Activated B cell treated with CpG ODN at 0.5 μM for 24 hours (primary cell): ENCODE measurements at regions of chr20 and their contacts with region 1.

Region 1: DNA sequence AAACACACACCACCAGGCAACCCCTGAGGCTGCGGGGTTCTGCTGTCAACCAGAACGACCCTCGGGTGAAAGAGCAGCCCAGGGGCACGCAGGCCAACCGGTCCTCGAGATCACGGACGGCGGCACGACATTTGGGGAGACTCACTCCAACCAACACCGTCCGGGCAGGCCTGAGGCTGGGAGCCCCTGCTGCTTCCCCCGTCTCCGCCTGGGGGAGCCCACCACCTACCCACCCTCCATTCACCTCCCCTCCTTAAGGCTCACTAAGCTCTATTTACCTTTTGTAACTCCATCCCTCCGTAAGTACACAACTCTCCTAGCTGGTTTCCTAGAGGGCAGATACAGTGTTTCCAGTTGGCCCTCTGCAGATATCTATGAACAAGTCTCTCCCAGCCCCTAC is 971.3 kb upstream of the DEFB115 start:
- DNase-seq: no peak
- ATAC-seq: no peak
- H3K4me3 Mint-ChIP-seq: no peak overlapping the region
- H3K27ac Mint-ChIP-seq: no peak overlapping the region
- H3K4me1 Mint-ChIP-seq: peaks cover 38% of the 10 kb centered on the region
- H3K27me3 Mint-ChIP-seq: no peaks in the 10 kb centered on the region
- CTCF ChIP-seq: no peak

Region 2: DNA sequence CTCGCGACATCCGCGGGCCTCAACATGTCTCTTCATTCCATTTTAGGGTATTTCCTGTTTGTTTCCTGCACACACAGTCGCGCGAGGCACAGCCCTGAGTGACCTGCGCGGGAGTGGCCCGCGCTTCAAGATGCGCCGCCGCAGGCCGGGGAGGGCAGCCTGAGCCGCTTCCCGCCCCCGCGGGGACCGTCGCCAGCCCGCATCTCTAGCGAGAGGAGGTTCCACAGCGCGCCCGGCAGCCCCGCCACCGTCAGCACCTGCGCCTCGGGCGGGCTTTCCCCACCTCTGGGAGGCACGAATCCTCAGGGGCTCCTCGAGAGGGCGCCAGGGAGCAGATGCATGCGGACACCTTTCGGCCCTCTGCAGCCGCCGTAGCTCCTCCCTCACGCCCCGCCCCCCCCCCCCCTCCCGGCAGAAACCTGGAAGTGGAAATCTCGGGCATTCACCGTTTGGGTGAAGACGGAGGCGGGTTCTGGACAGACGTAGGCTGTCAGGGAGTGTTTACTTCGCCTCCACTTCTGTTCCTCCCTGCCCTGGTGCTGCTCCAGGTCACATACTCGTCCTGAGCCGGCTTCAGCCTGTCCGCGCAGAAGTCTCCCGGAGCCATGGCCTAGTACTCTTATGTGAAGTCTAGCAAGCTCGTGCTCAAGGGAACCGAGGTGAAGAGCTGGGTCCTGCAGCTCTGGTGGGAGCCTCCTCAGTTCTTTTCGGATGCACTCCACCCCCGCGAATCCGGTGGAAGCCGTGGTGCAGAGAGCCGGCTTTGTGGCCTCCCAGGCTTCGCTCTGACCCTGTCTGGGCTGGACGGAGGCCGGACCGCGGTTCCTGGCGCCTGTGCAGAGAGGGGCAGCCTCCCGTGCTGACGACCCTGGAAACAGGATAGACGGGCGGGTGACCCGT is 90.9 kb after region 1 on chr20:
- CTCF ChIA-PET with region 1: no interaction called
- POLR2A ChIA-PET with region 1: interaction called, 7 read pairs
- intact Hi-C with region 1: loop called (anchors 1 kb)
- DNase-seq: peak; percentile 85
- ATAC-seq: peak; percentile 96
- H3K4me3 Mint-ChIP-seq: peak overlapping the region; percentile 96
- H3K27ac Mint-ChIP-seq: peak overlapping the region; percentile 91
- H3K4me1 Mint-ChIP-seq: peaks cover 29% of the 10 kb centered on the region
- H3K27me3 Mint-ChIP-seq: no peaks in the 10 kb centered on the region
- CTCF ChIP-seq: no peak

Region 3: GRCh38 chr20:30937790-30938189 is 651.6 kb after region 1 on chr20:
- CTCF ChIA-PET with region 1: no interaction called
- POLR2A ChIA-PET with region 1: no interaction called
- intact Hi-C with region 1: no loop called
- DNase-seq: no peak
- ATAC-seq: no peak
- H3K4me3 Mint-ChIP-seq: no peak overlapping the region
- H3K27ac Mint-ChIP-seq: no peak overlapping the region
- H3K4me1 Mint-ChIP-seq: no peaks in the 10 kb centered on the region
- H3K27me3 Mint-ChIP-seq: no peaks in the 10 kb centered on the region
- CTCF ChIP-seq: no peak